ENCODE measurements at regions of chrX and their contacts with region 1.

Region 1: GRCh38 chrX:118807151-118808017 is 16.2 kb upstream of the ZCCHC12 start:
- DNase-seq: peak; percentile 72
- H3K4me3 ChIP-seq: no peak overlapping the region
- H3K27ac ChIP-seq: no peak overlapping the region
- H3K4me1 ChIP-seq: no peaks in the 10 kb centered on the region
- H3K27me3 ChIP-seq: peaks cover 0 to 7% (median 0%) of the 10 kb centered on the region in 7 donors
- CTCF ChIP-seq: peak; percentile 33 to 69 (median 60)
- POLR2A ChIP-seq: no peak

Region 2: DNA sequence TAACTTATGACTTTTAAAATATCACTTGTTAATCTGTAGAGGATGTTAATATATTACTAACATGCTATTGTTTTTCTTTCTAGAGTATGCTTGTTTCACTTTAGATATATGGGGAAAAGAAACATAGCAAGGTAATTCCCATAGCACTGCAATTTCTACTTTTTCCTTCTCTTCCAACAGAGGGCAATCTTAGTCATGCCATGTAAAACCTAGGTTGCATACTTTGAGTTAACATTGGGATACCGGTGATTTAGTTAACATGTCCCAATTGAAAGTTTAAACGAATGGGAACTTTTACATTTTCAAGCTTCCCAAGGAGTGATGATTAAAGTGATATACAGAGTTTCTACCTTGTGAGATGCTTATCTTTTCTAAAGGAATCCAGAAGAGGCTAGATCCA is 169.4 kb before region 1 on chrX:
- intact Hi-C with region 1: loop called (anchors 10 kb)
- DNase-seq: no peak
- H3K4me3 ChIP-seq: no peak overlapping the region
- H3K27ac ChIP-seq: no peak overlapping the region
- H3K4me1 ChIP-seq: no peaks in the 10 kb centered on the region
- H3K27me3 ChIP-seq: no peaks in the 10 kb centered on the region
- CTCF ChIP-seq: no peak
- POLR2A ChIP-seq: no peak

Measured in spleen (tissue), 13 donors.